Posterior vena cava (tissue), 2 donors: ENCODE measurements at regions of chr3 and their contacts with region 1.

Region 1: GRCh38 chr3:66407611-66408218 is 93.1 kb downstream of the LRIG1 start:
- DNase-seq: peak; percentile 88

Region 2: DNA sequence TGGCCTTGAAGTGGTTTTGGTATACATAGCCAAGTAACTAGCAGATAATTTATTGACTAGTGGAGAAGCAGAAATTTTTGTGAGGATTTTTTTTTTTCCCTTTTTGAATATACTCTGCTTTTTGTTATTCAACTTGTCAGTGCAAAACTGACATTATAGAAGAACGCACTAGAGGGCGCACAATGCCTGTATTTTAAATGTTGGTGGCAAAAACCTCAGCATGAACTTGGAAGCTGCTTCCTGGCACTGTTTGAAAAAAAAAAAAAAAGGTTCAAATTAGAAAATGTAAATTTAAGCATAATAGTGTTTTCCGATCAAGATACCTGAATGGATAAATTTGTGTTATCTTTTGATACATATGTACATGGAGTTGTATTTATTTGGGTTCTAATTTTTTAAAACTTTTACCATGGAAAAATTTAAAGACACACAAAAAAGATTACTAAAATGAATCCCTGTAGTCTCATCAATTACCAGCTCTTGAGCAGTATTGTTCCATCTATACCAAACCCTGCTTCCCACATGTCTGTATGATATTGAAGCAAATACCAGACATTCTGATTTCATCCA is 130.9 kb before region 1 on chr3:
- intact Hi-C with region 1: loop called in 1 of 2 experiments (anchors 10 kb)
- DNase-seq: no peak

Region 3: GRCh38 chr3:66302288-66302687 is 105.4 kb before region 1 on chr3:
- intact Hi-C with region 1: no loop called
- DNase-seq: no peak

Region 4: DNA sequence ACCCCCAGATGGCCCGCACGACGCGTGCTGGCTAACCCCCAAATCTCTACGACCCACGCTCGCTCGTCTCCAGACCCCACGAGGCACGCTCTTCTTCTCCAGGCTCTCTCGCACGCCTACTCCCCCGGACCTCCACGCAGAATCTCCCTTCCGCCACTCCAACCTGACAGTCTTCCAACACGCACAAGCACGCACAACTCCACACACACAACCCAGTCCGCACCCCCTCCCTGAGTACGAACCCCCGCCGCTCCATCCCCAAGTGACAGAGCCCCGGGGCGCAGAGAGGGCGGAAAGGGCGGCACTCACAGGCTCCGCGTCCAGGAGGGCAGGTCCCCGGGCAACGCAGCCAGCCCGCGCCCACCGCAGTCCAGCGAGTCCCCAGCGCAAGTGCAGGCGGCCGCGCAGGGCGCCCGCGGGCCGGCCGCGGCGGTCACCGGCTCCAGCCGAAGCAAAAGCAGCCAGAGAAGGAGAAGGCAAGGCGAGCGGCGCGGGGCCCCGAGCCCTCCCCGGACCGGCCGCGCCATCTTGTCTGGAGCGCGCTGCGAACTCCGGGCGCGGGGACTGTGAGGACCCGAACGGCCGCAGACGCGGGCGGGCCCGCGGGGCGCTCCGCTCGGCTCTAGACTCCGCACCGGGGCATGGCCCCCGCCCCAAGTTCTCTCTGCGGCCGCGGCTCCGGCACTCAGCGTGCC is 92.3 kb after region 1 on chr3:
- intact Hi-C with region 1: loop called (anchors 5 kb)
- DNase-seq: peak; percentile 84